ENCODE measurements at regions of chr6 and their contacts with region 1.

Region 1: GRCh38 chr6:31749301-31750065 is 9.7 kb downstream of the MSH5 start:
- DNase-seq: no peak
- ATAC-seq: no peak
- H3K4me3 Mint-ChIP-seq: no peak overlapping the region
- H3K27ac Mint-ChIP-seq: no peak overlapping the region
- H3K4me1 Mint-ChIP-seq: no peaks in the 10 kb centered on the region
- H3K27me3 Mint-ChIP-seq: no peaks in the 10 kb centered on the region
- CTCF ChIP-seq: no peak

Region 2: DNA sequence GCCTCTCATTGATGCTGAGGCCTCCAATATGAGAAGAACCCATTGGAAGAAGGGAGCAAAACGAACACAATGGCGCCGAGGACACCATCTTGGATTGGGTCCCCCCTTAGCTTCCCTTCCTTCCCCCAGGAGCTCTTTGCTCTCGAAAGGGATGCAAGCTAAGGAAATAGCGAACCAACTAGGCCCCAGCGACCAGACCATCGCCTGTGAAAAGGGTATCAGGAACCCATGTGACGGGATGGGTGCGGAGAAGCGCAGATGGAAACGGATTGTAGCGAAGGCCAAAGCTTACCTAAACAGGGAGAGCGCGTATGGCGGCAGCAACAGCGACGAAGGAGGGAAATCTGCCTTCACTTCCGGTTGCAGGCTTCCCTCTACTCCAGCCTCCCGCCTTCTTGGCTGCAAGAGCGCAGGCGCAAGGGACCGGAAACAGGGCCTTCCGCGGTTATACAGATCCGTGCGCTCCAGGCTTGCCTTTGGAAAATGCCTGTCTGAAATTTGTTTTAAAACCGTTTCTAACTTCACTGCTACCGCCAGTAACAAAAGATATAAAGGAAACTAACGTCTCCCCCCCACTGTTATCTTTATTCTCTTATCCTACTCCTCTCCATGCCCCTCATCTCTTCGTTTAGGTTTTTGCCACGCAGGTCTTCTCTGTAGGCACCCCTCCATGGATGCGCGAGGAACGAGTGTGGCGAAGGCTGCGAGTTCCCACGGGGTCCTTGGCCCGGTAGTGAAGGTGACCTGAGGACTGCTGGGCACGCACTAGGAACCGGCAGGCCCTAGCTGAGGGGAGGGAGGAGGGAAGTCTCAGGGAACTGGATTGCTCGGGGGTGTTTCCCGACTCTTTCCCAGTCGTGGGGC is 207.6 kb before region 1 on chr6 and contains the start of gene DDX39B:
- CTCF ChIA-PET with region 1: no interaction called
- POLR2A ChIA-PET with region 1: no interaction called
- intact Hi-C with region 1: no loop called
- DNase-seq: peak; percentile 80
- ATAC-seq: peak; percentile 77
- H3K4me3 Mint-ChIP-seq: peak within 1 kb of the TSS; percentile 98
- H3K27ac Mint-ChIP-seq: peak within 1 kb of the TSS; percentile 97
- H3K4me1 Mint-ChIP-seq: peaks cover 58% of the 10 kb centered on the region
- H3K27me3 Mint-ChIP-seq: no peaks in the 10 kb centered on the region
- CTCF ChIP-seq: no peak
- total RNA-seq, gene DDX39B: 431 and 484 TPM in 2 replicates

Region 3: DNA sequence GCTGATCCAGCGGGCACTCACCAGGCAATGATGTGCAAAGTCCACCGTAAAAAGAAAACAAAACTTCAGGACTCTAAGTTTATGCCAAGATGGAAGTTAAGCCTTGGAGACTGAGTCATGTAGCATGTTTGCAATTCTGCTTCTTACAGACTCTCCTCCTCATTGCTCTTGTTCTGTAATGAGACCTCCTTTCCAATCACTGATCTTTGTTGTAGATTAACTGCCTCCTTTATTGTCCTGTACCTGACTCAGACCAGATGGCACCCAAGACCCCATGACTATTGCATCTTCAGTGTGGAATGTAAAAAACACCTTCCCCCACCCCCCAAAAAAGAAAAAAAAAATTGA is 102.0 kb after region 1 on chr6:
- CTCF ChIA-PET with region 1: no interaction called
- POLR2A ChIA-PET with region 1: interaction called, 11 read pairs
- intact Hi-C with region 1: no loop called
- DNase-seq: no peak
- ATAC-seq: no peak
- H3K4me3 Mint-ChIP-seq: no peak overlapping the region
- H3K27ac Mint-ChIP-seq: no peak overlapping the region
- H3K4me1 Mint-ChIP-seq: no peaks in the 10 kb centered on the region
- H3K27me3 Mint-ChIP-seq: no peaks in the 10 kb centered on the region
- CTCF ChIP-seq: no peak

Measured in activated B cell treated with CpG ODN at 0.5 μM for 24 hours (primary cell).